OCI-LY7 (cell line): ENCODE measurements at regions of chr12 and their contacts with region 1.

Region 1: DNA sequence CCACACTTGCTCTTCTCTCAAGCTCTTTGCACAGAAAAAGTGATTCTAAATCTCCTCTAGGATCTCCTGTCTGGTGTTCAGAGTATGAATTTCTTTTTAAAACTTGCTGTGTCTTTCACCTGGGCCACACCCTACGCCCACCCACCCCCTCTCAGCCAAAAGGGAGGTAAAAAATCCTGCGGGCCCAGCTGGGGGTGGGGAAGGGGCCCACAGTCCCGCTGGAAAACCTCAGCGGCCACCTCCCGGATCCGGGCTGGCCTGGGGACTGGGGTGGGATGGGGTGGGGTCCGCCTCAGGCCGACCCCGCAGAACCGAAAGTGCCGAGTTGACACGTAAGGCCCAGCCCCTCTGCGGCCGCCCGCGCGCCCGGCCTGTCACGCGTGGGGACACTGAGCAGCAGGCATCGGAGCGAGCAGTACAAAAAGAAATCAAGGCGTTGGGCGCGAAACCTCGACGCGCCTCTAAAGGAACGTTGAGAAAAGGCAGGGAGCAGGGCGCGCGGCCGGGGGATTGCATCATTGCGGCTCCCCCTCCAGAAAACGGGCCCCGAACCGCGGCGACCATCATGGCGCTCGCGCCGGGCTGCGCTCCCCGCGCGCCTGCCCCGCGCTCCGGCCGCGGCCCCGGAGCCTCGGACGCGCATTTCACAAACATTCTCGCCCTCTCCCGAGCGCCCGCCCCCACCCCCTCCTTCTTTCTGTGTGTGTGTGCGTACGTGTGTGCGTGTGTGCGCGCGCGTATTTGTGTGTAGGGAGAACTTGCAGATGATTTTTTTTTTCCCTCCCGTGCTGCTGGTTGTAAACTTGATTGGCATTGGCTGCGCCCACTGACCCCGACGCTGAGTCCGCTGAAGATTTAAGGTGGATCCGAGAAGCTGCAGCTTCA is 7.7 kb downstream of the CDKN1B start:
- DNase-seq: peak; percentile 95
- H3K4me3 ChIP-seq: peak overlapping the region; percentile 88
- H3K27ac ChIP-seq: peak overlapping the region; percentile 98
- H3K4me1 ChIP-seq: peaks cover 52% of the 10 kb centered on the region
- CTCF ChIP-seq: no peak

Region 2: GRCh38 chr12:11758510-11759493 is 966.1 kb before region 1 on chr12:
- CTCF ChIA-PET with region 1: no interaction called
- POLR2A ChIA-PET with region 1: no interaction called
- intact Hi-C with region 1: loop called (anchors 10 kb)
- DNase-seq: peak; percentile 82
- H3K4me3 ChIP-seq: peak overlapping the region; percentile 49
- H3K27ac ChIP-seq: peak overlapping the region; percentile 100
- H3K4me1 ChIP-seq: peaks cover 100% of the 10 kb centered on the region
- CTCF ChIP-seq: no peak

Region 3: GRCh38 chr12:12696562-12697383 is 28.1 kb before region 1 on chr12:
- CTCF ChIA-PET with region 1: no interaction called
- POLR2A ChIA-PET with region 1: interaction called, 15 read pairs
- intact Hi-C with region 1: loop called (anchors 1 kb)
- DNase-seq: peak; percentile 97
- H3K4me3 ChIP-seq: peak overlapping the region; percentile 73
- H3K27ac ChIP-seq: peak overlapping the region; percentile 97
- H3K4me1 ChIP-seq: peaks cover 48% of the 10 kb centered on the region
- CTCF ChIP-seq: peak; percentile 27; the same call in 1 of the 2 replicates

Region 4: GRCh38 chr12:14157088-14157747 is 1432.3 kb after region 1 on chr12:
- CTCF ChIA-PET with region 1: no interaction called
- POLR2A ChIA-PET with region 1: interaction called, 3 read pairs
- intact Hi-C with region 1: loop called (anchors 5 kb)
- DNase-seq: peak; percentile 99
- H3K4me3 ChIP-seq: peak overlapping the region; percentile 49
- H3K27ac ChIP-seq: peak overlapping the region; percentile 97
- H3K4me1 ChIP-seq: peaks cover 85% of the 10 kb centered on the region
- CTCF ChIP-seq: no peak

Region 5: DNA sequence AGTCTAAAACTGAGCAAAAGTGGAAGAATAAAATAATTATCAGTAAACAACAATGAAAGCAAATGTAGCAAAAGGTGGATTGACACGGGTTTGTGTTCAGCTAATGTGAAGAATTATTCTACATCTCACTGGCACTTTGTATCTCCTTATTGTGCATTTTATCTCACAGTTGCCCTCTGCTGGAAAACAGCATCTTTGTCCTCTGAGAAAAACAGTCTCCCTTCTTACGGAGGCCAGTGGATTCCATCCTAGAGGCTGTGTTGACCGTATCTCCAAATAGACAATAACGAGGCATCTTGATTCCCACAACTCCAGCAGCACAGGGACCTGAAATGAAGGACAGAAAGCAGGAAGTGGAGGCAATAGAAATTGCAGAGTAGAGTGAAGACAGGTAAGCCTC is 1894.1 kb after region 1 on chr12:
- CTCF ChIA-PET with region 1: no interaction called
- POLR2A ChIA-PET with region 1: no interaction called
- intact Hi-C with region 1: loop called (anchors 10 kb)
- DNase-seq: peak; percentile 65
- H3K4me3 ChIP-seq: no peak overlapping the region
- H3K27ac ChIP-seq: peak overlapping the region; percentile 52
- H3K4me1 ChIP-seq: peaks cover 66% of the 10 kb centered on the region
- CTCF ChIP-seq: peak; percentile 88